ENCODE measurements at regions of chr1 and their contacts with region 1.

Region 1: GRCh38 chr1:202926720-202927491 is at the start of gene KLHL12:
- DNase-seq: peak; percentile 98
- H3K4me3 ChIP-seq: peak within 1 kb of the TSS; percentile 62 to 91 (median 88)
- H3K27ac ChIP-seq: peak within 1 kb of the TSS; percentile 87 to 97 (median 96)
- H3K4me1 ChIP-seq: peaks cover 0 to 28% (median 5%) of the 10 kb centered on the region in 4 donors
- H3K27me3 ChIP-seq: no peaks in the 10 kb centered on the region
- CTCF ChIP-seq: peak; percentile 15 to 74 (median 60)
- EP300 ChIP-seq: peak in 1 of 4 donors; percentile 39
- POLR2A ChIP-seq: peak; percentile 84 to 93
- total RNA-seq, gene KLHL12: 12.9 to 23.9 (median 15.9) TPM

Region 2: GRCh38 chr1:202888531-202889360 is 38.2 kb before region 1 on chr1 and contains the start of gene RABIF:
- intact Hi-C with region 1: loop called (anchors 5 kb)
- DNase-seq: peak; percentile 98
- H3K4me3 ChIP-seq: peak within 1 kb of the TSS; percentile 69 to 82 (median 75)
- H3K27ac ChIP-seq: peak within 1 kb of the TSS; percentile 87 to 98 (median 92)
- H3K4me1 ChIP-seq: peaks cover 0 to 17% (median 10%) of the 10 kb centered on the region in 4 donors
- H3K27me3 ChIP-seq: no peaks in the 10 kb centered on the region
- CTCF ChIP-seq: no peak
- EP300 ChIP-seq: no peak
- POLR2A ChIP-seq: peak; percentile 72 to 92
- total RNA-seq, gene RABIF: 3.6 to 7.3 (median 4.8) TPM

Region 3: GRCh38 chr1:202957733-202958543 is 31.0 kb after region 1 on chr1 and contains the start of gene ADIPOR1:
- intact Hi-C with region 1: loop called (anchors 2 kb)
- DNase-seq: peak; percentile 96
- H3K4me3 ChIP-seq: peak within 1 kb of the TSS; percentile 81 to 99 (median 90)
- H3K27ac ChIP-seq: peak within 1 kb of the TSS; percentile 91 to 96 (median 92)
- H3K4me1 ChIP-seq: peaks cover 0 to 46% (median 39%) of the 10 kb centered on the region in 4 donors
- H3K27me3 ChIP-seq: no peaks in the 10 kb centered on the region
- CTCF ChIP-seq: no peak
- EP300 ChIP-seq: no peak
- POLR2A ChIP-seq: peak in 1 of 2 donors; percentile 43
- total RNA-seq, gene ADIPOR1: 57.4 to 76.2 (median 65.8) TPM

Region 4: DNA sequence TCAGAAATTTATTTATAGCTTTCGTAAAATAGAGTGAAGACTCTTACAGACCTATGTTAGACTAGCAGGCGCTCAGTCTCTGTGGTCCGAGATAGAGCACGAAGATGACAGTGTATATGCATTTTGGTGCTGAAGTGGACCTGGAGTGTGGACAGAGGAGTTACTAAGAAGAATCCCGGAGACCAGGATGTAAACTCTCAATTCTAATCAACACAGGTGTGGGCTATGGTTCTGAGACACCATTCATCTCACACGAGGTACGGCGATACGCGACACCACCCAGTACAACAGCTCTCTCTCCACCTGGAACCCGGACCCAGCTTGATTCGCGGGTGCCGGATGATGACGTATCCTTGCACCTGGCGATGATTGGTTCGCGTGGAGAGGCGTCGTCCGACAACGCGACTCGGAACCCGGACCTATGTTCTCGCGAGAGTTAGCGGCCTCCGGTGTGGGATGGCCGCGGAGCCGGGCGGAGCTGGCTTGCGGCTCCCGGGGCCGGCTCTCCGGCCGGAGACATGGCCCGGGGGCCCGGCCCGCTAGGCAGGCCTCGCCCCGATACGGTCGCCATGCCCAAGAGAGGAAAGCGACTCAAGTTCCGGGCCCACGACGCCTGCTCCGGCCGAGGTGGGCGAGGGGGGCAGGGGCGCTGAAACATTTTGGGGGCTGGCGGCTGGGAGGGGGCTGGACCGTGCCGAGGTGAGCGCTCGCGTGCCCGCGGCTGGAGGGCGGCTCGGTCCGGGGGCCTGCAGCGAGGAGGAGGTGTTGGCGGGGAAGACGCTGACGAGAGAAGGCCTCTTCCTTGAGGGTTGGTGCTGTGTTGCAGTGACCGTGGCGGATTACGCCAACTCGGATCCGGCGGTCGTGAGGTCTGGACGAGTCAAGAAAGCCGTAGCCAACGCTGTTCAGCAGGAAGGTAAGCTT is 80.3 kb after region 1 on chr1 and contains the start of gene TMEM183A:
- intact Hi-C with region 1: loop called (anchors 2 kb)
- DNase-seq: peak; percentile 99
- H3K4me3 ChIP-seq: peak within 1 kb of the TSS; percentile 69 to 97 (median 81)
- H3K27ac ChIP-seq: peak within 1 kb of the TSS; percentile 88 to 96 (median 93)
- H3K4me1 ChIP-seq: peaks cover 0 to 30% (median 26%) of the 10 kb centered on the region in 4 donors
- H3K27me3 ChIP-seq: no peaks in the 10 kb centered on the region
- CTCF ChIP-seq: no peak
- EP300 ChIP-seq: no peak
- POLR2A ChIP-seq: peak; percentile 82 to 91
- total RNA-seq, gene TMEM183A: 71.7 to 99.4 (median 88.2) TPM

Measured in sigmoid colon (tissue), 7 donors.